WTC11 (cell line): ENCODE measurements at regions of chr12 and their contacts with region 1.

Region 1: GRCh38 chr12:52082988-52083637 is 3.6 kb downstream of the SMIM41 start:
- DNase-seq: peak; percentile 83
- ATAC-seq: peak; percentile 46
- H3K4me3 Mint-ChIP-seq: no peak overlapping the region
- H3K27ac Mint-ChIP-seq: no peak overlapping the region
- H3K4me1 Mint-ChIP-seq: peaks cover 19% of the 10 kb centered on the region
- H3K27me3 Mint-ChIP-seq: no peaks in the 10 kb centered on the region
- CTCF ChIP-seq: peak; percentile 92

Region 2: DNA sequence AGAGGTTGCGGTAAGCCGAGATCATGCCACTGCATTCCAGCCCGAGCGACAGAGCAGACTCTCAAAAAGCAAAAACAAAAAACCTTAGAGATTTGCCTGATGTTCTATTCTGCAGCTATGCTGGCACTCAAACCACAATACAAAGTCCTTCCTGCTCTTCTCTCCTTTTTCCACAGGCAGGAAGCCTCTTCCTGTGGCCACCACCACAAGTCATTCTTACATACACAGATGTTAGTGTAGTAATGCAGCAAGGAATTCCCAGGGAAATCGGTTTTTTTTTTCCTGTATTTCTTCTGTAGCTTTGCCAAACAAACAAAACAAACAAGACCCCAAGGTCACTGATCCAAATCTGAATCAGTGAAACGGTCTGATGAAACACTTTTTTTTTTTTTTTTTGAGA is 338.9 kb before region 1 on chr12:
- CTCF ChIA-PET with region 1: no interaction called
- POLR2A ChIA-PET with region 1: no interaction called
- DNase-seq: no peak
- ATAC-seq: no peak
- H3K4me3 Mint-ChIP-seq: no peak overlapping the region
- H3K27ac Mint-ChIP-seq: no peak overlapping the region
- H3K4me1 Mint-ChIP-seq: no peaks in the 10 kb centered on the region
- H3K27me3 Mint-ChIP-seq: peaks cover 4% of the 10 kb centered on the region; the same call in 1 of the 2 replicates
- CTCF ChIP-seq: no peak

Region 3: DNA sequence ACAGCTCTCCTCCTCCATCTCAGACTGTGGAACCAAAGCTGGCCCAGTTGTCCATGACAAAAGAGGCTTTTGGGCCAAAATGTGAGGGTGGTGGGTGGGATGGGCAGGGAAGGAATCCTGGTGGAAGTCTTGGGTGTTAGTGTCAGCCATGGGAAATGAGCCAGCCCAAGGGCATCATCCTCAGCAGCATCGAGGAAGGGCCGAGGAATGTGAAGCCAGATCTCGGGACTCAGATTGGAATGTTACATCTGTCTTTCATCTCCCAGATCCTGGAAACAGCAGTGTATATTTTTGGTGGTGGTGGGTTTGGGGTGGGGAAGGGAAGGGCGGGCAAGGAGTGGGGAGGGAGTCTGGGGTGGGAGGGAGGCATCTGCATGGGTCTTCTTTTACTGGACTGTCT is 88.2 kb before region 1 on chr12:
- CTCF ChIA-PET with region 1: interaction called, 10 read pairs
- POLR2A ChIA-PET with region 1: no interaction called
- DNase-seq: no peak
- ATAC-seq: no peak
- H3K4me3 Mint-ChIP-seq: no peak overlapping the region
- H3K27ac Mint-ChIP-seq: no peak overlapping the region
- H3K4me1 Mint-ChIP-seq: peaks cover 3% of the 10 kb centered on the region
- H3K27me3 Mint-ChIP-seq: no peaks in the 10 kb centered on the region
- CTCF ChIP-seq: no peak

Region 4: GRCh38 chr12:52004042-52004648 is 79.0 kb before region 1 on chr12:
- CTCF ChIA-PET with region 1: interaction called, 21 read pairs
- POLR2A ChIA-PET with region 1: no interaction called
- DNase-seq: peak; percentile 74
- ATAC-seq: peak; percentile 39
- H3K4me3 Mint-ChIP-seq: no peak overlapping the region
- H3K27ac Mint-ChIP-seq: no peak overlapping the region
- H3K4me1 Mint-ChIP-seq: peaks cover 20% of the 10 kb centered on the region
- H3K27me3 Mint-ChIP-seq: peaks cover 47% of the 10 kb centered on the region
- CTCF ChIP-seq: peak; percentile 42

Region 5: GRCh38 chr12:52032804-52033502 is 50.2 kb before region 1 on chr12:
- CTCF ChIA-PET with region 1: interaction called, 388 read pairs
- POLR2A ChIA-PET with region 1: interaction called, 5 read pairs
- DNase-seq: peak; percentile 97
- ATAC-seq: peak; percentile 93
- H3K4me3 Mint-ChIP-seq: peak overlapping the region; percentile 69
- H3K27ac Mint-ChIP-seq: peak overlapping the region; percentile 95
- H3K4me1 Mint-ChIP-seq: peaks cover 31% of the 10 kb centered on the region
- H3K27me3 Mint-ChIP-seq: peaks cover 46% of the 10 kb centered on the region
- CTCF ChIP-seq: no peak

Region 6: DNA sequence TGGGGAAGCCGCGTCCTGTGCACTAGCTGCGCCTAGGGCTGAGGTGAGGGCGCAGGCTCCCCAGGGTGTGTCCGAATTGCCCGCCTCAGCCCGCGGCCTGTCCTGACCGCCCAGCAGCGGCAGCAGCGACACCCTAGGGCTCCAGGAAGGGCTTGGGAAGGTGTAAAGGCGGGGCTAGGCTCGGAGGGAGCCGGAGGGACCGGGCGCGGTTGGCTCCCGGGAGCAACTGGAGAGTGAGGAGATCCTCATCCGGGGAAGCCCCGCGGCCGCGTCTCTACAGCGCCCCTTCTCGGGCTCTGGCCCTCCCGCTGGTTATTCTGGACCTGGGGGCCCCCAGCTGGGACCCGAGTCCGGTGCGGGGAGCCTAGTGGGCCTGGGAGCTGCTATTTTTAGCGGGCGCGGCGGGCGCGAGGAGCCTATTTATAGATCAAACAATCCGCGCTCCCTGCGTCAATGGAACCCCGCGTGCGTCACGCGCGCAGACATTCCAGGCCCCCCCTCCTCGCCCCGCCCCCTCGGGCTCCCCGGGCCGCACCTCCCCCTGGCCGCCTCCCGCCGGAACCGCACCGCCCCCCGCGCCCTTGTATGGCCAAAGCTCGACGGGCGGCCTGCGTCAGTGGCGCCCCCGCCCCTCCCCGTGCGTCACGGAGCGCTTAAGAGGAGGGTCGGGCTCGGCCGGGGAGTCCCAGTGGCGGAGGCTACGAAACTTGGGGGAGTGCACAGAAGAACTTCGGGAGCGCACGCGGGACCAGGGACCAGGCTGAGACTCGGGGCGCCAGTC is 32.2 kb before region 1 on chr12 and contains the start of gene NR4A1:
- CTCF ChIA-PET with region 1: interaction called, 13 read pairs
- POLR2A ChIA-PET with region 1: interaction called, 3 read pairs
- DNase-seq: peak; percentile 90
- ATAC-seq: peak; percentile 68
- H3K4me3 Mint-ChIP-seq: peak within 1 kb of the TSS; percentile 86
- H3K27ac Mint-ChIP-seq: peak within 1 kb of the TSS; percentile 87
- H3K4me1 Mint-ChIP-seq: peaks cover 28% of the 10 kb centered on the region
- H3K27me3 Mint-ChIP-seq: peaks cover 50% of the 10 kb centered on the region
- CTCF ChIP-seq: no peak
- total RNA-seq, gene NR4A1: 19.2 to 26.9 TPM (median 22.0 TPM) in 3 replicates

Region 7: DNA sequence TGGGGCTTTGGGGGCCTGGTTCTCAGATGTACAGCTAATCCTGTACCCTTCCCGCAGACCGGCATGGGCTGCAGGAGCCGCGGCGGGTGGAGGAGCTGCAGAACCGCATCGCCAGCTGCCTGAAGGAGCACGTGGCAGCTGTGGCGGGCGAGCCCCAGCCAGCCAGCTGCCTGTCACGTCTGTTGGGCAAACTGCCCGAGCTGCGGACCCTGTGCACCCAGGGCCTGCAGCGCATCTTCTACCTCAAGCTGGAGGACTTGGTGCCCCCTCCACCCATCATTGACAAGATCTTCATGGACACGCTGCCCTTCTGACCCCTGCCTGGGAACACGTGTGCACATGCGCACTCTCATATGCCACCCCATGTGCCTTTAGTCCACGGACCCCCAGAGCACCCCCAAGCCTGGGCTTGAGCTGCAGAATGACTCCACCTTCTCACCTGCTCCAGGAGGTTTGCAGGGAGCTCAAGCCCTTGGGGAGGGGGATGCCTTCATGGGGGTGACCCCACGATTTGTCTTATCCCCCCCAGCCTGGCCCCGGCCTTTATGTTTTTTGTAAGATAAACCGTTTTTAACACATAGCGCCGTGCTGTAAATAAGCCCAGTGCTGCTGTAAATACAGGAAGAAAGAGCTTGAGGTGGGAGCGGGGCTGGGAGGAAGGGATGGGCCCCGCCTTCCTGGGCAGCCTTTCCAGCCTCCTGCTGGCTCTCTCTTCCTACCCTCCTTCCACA is 24.3 kb before region 1 on chr12:
- CTCF ChIA-PET with region 1: interaction called, 10 read pairs
- POLR2A ChIA-PET with region 1: no interaction called
- DNase-seq: no peak
- ATAC-seq: no peak
- H3K4me3 Mint-ChIP-seq: no peak overlapping the region
- H3K27ac Mint-ChIP-seq: no peak overlapping the region
- H3K4me1 Mint-ChIP-seq: no peaks in the 10 kb centered on the region
- H3K27me3 Mint-ChIP-seq: no peaks in the 10 kb centered on the region
- CTCF ChIP-seq: no peak

Region 8: GRCh38 chr12:52069327-52070184 is 13.6 kb before region 1 on chr12 and contains the start of gene ATG101:
- CTCF ChIA-PET with region 1: interaction called, 84 read pairs
- POLR2A ChIA-PET with region 1: interaction called, 11 read pairs
- DNase-seq: peak; percentile 91
- ATAC-seq: peak; percentile 98
- H3K4me3 Mint-ChIP-seq: peak within 1 kb of the TSS; percentile 97
- H3K27ac Mint-ChIP-seq: peak within 1 kb of the TSS; percentile 99
- H3K4me1 Mint-ChIP-seq: peaks cover 14% of the 10 kb centered on the region
- H3K27me3 Mint-ChIP-seq: peaks cover 9% of the 10 kb centered on the region
- CTCF ChIP-seq: no peak
- total RNA-seq, gene ATG101: 43.3 to 52.1 TPM (median 45.0 TPM) in 3 replicates

Region 9: DNA sequence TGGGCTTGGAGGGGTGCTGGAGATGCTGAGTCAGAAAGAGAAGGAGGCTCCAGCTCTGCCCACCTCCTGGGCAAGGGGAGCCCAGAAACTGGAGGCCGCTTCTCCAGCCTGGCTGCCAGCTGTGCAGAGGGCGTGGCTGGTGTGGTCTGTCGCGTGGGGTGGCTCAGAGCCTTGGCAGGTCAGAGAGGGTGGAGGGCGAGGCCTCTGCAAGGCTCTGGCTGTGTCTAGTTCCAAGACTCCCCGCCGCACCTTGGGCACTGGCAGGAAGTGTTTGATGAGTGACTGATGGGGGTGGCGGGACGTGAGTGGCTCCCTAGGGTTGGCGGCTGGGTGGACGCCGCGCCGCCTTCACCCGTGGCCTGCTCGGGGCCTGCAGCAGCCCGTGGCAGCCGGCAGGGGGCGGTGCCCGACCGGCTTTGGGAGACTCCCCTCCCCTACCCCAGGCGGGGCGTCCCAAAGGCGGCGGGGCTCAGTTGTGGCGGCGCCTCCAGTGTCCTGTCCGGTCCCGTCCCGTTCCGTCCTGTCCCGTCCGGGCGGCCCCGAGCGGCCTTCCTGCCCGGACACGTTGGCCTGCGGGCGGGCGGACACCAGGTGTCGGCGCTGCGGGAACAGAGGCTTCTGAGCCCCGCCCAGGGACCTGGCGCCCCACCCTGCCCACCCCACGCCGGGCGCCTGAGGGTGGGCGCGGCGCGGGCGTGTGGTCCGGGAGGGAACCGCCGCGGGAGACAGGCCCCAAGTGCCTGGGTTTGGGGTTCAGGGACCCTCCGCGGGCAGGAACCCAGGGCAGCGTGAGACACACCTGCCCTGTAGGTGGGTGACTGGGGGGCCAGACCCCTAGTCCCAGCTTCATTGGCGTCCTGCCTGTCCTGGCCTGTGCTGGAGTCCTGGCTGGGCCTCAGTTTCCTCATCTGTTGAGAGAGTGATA is 69.0 kb after region 1 on chr12:
- CTCF ChIA-PET with region 1: no interaction called
- POLR2A ChIA-PET with region 1: no interaction called
- DNase-seq: peak; percentile 88
- ATAC-seq: peak; percentile 69
- H3K4me3 Mint-ChIP-seq: peak overlapping the region; percentile 40
- H3K27ac Mint-ChIP-seq: no peak overlapping the region
- H3K4me1 Mint-ChIP-seq: peaks cover 16% of the 10 kb centered on the region
- H3K27me3 Mint-ChIP-seq: no peaks in the 10 kb centered on the region
- CTCF ChIP-seq: peak; percentile 92